CD4-positive, alpha-beta T cell (primary cell): ENCODE measurements at regions of chr15 and their contacts with region 1.

Region 1: GRCh38 chr15:60362321-60363086 is 35.3 kb downstream of the ANXA2 start:
- DNase-seq: peak in 5 of 14 experiments; percentile 6 to 50 (median 25)
- ATAC-seq: peak; percentile 75
- H3K4me3 ChIP-seq: no peak overlapping the region
- H3K4me3 Mint-ChIP-seq: no peak overlapping the region
- H3K27ac ChIP-seq: no peak overlapping the region
- H3K27ac Mint-ChIP-seq: peak overlapping the region; percentile 62
- H3K4me1 ChIP-seq: peaks cover 15% of the 10 kb centered on the region
- H3K4me1 Mint-ChIP-seq: peaks cover 19% of the 10 kb centered on the region
- H3K27me3 ChIP-seq: no peaks in the 10 kb centered on the region
- H3K27me3 Mint-ChIP-seq: no peaks in the 10 kb centered on the region
- CTCF ChIP-seq: no peak

Region 2: DNA sequence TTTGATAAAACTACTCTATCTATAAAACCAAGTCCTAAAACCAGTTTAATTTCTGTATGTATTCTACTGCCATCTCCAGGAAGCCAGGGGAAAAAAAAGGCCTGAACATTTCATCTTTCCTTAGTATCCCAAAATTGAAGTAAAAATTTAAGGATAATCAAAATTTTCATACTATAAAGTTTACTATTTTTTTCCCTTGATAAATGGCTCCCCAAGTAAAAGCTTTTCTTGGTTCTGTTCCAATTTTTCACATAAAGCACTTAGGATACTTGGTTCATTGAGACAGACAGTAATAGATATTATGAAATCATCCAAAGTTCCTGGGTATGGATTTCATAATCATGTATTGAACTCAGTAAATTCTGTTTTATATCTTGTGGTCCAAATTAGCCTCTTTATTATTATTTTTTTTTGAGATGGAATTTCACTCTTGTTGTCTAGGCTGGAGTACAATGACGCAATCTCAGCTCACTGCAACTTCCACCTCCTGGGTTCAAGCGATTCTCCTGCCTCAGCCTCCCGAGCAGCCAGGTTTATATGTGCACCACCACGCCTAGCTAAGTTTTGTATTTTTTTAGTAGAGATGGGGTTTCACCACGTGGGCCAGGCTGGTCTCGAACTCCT is 81.9 kb after region 1 on chr15:
- CTCF ChIA-PET with region 1: interaction called, 5 read pairs
- POLR2A ChIA-PET with region 1: no interaction called
- intact Hi-C with region 1: loop called (anchors 1 kb)
- DNase-seq: peak in 3 of 14 experiments; percentile 9 to 14 (median 13)
- ATAC-seq: no peak
- H3K4me3 ChIP-seq: no peak overlapping the region
- H3K4me3 Mint-ChIP-seq: no peak overlapping the region
- H3K27ac ChIP-seq: no peak overlapping the region
- H3K27ac Mint-ChIP-seq: no peak overlapping the region
- H3K4me1 ChIP-seq: no peaks in the 10 kb centered on the region
- H3K4me1 Mint-ChIP-seq: peaks cover 4% of the 10 kb centered on the region
- H3K27me3 ChIP-seq: no peaks in the 10 kb centered on the region
- H3K27me3 Mint-ChIP-seq: no peaks in the 10 kb centered on the region
- CTCF ChIP-seq: peak; percentile 52

Region 3: DNA sequence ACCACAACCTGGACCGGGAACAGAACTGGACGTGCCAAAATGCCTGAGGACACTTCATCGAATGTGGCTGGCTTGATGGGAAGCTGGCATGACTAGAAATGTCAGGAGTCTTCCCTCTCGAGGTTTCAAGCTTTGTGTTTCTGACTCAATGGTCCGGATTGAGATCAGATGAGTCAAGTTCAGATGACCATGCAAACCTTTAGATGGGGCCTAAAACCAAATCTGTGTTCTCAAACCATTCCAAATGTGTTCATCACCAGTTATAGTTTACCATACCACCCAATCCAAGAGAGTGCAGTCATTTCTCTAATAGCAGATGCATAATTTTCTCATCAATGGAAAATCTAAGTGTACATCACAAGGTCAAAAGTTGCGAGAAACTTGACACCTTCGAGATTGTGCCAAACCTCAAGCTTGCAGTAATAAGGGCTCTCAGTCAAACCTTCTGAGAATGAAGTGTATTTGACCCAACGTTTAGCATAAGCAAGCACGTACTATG is 497.5 kb after region 1 on chr15:
- CTCF ChIA-PET with region 1: no interaction called
- POLR2A ChIA-PET with region 1: no interaction called
- intact Hi-C with region 1: loop called in 1 of 2 experiments (anchors 5 kb)
- DNase-seq: peak in 1 of 14 experiments; percentile 46
- ATAC-seq: no peak
- H3K4me3 ChIP-seq: no peak overlapping the region
- H3K4me3 Mint-ChIP-seq: no peak overlapping the region
- H3K27ac ChIP-seq: no peak overlapping the region
- H3K27ac Mint-ChIP-seq: no peak overlapping the region
- H3K4me1 ChIP-seq: no peaks in the 10 kb centered on the region
- H3K4me1 Mint-ChIP-seq: peaks cover 41% of the 10 kb centered on the region
- H3K27me3 ChIP-seq: no peaks in the 10 kb centered on the region
- H3K27me3 Mint-ChIP-seq: no peaks in the 10 kb centered on the region
- CTCF ChIP-seq: no peak

Region 4: GRCh38 chr15:60932051-60932915 is 569.8 kb after region 1 on chr15:
- CTCF ChIA-PET with region 1: interaction called, 3 read pairs
- POLR2A ChIA-PET with region 1: no interaction called
- intact Hi-C with region 1: loop called in 1 of 2 experiments (anchors 5 kb)
- DNase-seq: peak; percentile 25 to 86 (median 55)
- ATAC-seq: peak; percentile 92
- H3K4me3 ChIP-seq: no peak overlapping the region
- H3K4me3 Mint-ChIP-seq: no peak overlapping the region
- H3K27ac ChIP-seq: no peak overlapping the region
- H3K27ac Mint-ChIP-seq: no peak overlapping the region
- H3K4me1 ChIP-seq: peaks cover 7% of the 10 kb centered on the region
- H3K4me1 Mint-ChIP-seq: peaks cover 11% of the 10 kb centered on the region
- H3K27me3 ChIP-seq: no peaks in the 10 kb centered on the region
- H3K27me3 Mint-ChIP-seq: no peaks in the 10 kb centered on the region
- CTCF ChIP-seq: no peak

Region 5: GRCh38 chr15:61834076-61834697 is 1471.7 kb after region 1 on chr15:
- CTCF ChIA-PET with region 1: interaction called, 3 read pairs
- POLR2A ChIA-PET with region 1: no interaction called
- intact Hi-C with region 1: loop called in 1 of 2 experiments (anchors 10 kb)
- DNase-seq: peak; percentile 48 to 81 (median 66)
- ATAC-seq: peak; percentile 89
- H3K4me3 ChIP-seq: no peak overlapping the region
- H3K4me3 Mint-ChIP-seq: no peak overlapping the region
- H3K27ac ChIP-seq: no peak overlapping the region
- H3K27ac Mint-ChIP-seq: no peak overlapping the region
- H3K4me1 ChIP-seq: peaks cover 10% of the 10 kb centered on the region
- H3K4me1 Mint-ChIP-seq: peaks cover 6% of the 10 kb centered on the region
- H3K27me3 ChIP-seq: peaks cover 12% of the 10 kb centered on the region in 2 experiments
- H3K27me3 Mint-ChIP-seq: peaks cover 41% of the 10 kb centered on the region
- CTCF ChIP-seq: peak; percentile 96